ENCODE measurements at regions of chr2 and their contacts with region 1.

Region 1: GRCh38 chr2:239991689-239992314 is 33.3 kb downstream of the NDUFA10 start:
- DNase-seq: no peak
- H3K4me3 Mint-ChIP-seq: no peak overlapping the region
- H3K27ac Mint-ChIP-seq: no peak overlapping the region
- H3K4me1 Mint-ChIP-seq: no peaks in the 10 kb centered on the region
- H3K27me3 Mint-ChIP-seq: no peaks in the 10 kb centered on the region

Region 2: DNA sequence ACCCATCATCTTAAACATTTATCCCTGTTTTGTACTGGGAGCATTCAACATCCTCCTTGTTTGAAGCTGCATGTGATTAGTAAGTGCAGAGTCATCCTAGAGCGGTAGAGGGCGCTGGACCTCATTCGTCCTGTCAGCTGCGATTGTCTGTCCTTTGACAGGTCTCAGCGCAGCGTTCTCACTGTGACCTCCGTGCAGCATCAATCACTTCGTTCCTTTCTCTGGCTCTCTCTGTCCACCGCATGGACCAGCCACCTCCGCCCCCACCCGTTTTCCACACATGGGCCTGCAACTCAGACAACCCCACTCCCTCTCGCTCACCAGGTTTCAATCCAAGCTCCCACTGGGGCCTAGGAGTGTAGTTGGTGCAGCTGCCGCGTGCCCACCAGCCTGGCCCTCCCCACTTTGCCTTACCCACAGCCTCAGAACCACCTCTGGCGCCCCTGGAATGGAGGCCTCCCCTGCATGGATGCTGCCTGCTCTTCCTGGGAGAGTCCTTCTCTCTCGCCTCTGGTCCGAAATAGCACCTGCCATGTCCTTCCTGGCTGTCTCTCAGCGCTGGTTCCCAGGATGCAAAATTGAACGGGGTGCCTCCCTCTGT is 57.1 kb before region 1 on chr2:
- intact Hi-C with region 1: loop called (anchors 1 kb)
- DNase-seq: peak; percentile 47
- H3K4me3 Mint-ChIP-seq: no peak overlapping the region
- H3K27ac Mint-ChIP-seq: no peak overlapping the region
- H3K4me1 Mint-ChIP-seq: peaks cover 9% of the 10 kb centered on the region
- H3K27me3 Mint-ChIP-seq: peaks cover 6% of the 10 kb centered on the region

Measured in activated T-helper 1 cell treated with anti-CD3 and anti-CD28 coated beads, Interleukin-12 subunit alpha, Interleukin-12 subunit beta, Interleukin-2, Interleukin-4 antibody, amounts not matched to agents 30 ng/mL and 10 ng/mL and 1 ng/mL, durations not matched to agents 14 hours and 24 hours and 36 hours (primary cell).